ENCODE measurements at regions of chr13 and their contacts with region 1.

Region 1: GRCh38 chr13:33582121-33582520 is 235.8 kb upstream of the RFC3 start:
- DNase-seq: no peak
- ATAC-seq: no peak
- H3K4me3 ChIP-seq: no peak overlapping the region
- H3K4me1 ChIP-seq: no peaks in the 10 kb centered on the region
- CTCF ChIP-seq: no peak

Region 2: GRCh38 chr13:34533941-34534340 is 951.8 kb after region 1 on chr13:
- intact Hi-C with region 1: loop called in 1 of 2 experiments (anchors 10 kb)
- DNase-seq: no peak
- ATAC-seq: no peak
- H3K4me3 ChIP-seq: no peak overlapping the region
- H3K4me1 ChIP-seq: no peaks in the 10 kb centered on the region
- CTCF ChIP-seq: no peak

Measured in mucosa of descending colon (tissue), 3 donors.